ENCODE measurements at regions of chr11 and their contacts with region 1.

Region 1: DNA sequence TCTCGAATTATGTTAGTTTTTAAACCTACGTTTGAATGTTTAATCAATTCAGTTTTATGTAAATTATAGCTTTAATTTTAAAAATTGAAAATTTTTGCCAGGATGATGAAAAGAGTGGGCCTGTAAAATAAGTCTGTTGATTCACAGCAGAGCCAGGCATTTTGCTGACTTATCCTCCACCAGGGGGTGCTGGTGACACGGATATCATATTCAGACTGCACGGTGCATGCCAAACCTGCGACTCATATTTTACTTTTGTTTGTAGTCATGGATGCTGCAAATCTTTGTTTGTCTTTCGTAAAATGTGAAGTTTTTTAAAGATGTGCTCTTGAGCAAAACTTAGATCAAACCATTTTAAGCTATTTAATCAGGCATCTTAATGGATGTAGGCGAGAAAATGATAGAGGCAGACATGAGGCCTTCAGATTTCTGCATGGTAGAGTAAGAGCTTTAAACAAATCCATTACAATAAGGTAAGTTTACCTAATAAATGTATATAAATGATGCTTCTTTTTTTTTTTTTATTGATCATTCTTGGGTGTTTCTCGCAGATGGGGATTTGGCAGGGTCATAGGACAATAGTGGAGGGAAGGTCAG is 3.6 kb upstream of the OR8B3 start:
- DNase-seq: peak; percentile 71
- H3K4me3 Mint-ChIP-seq: no peak overlapping the region
- H3K27ac Mint-ChIP-seq: no peak overlapping the region
- H3K4me1 Mint-ChIP-seq: peaks cover 2% of the 10 kb centered on the region
- H3K27me3 Mint-ChIP-seq: no peaks in the 10 kb centered on the region

Region 2: DNA sequence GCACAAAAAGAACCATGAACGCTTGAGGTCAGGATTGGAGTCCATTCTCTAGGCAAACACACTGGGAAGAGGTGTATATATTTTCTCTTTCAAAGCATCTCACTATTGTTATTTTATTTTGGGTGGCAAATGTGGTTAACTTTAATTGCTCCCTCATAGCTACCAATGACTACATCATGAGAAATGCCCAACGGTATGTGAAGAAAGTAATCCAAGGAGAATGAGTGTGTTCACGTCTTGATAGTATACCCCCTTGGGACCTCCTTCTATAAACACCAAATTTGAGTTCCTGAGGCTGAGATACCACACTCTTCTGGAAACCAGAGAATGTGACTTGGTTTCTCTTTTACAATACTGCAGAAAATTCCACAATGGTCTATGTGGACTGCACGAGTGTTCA is 104.5 kb before region 1 on chr11:
- CTCF ChIA-PET with region 1: no interaction called
- POLR2A ChIA-PET with region 1: no interaction called
- intact Hi-C with region 1: no loop called
- DNase-seq: no peak
- H3K4me3 Mint-ChIP-seq: no peak overlapping the region
- H3K27ac Mint-ChIP-seq: no peak overlapping the region
- H3K4me1 Mint-ChIP-seq: no peaks in the 10 kb centered on the region
- H3K27me3 Mint-ChIP-seq: no peaks in the 10 kb centered on the region

Region 3: GRCh38 chr11:124586238-124586860 is 183.9 kb after region 1 on chr11:
- CTCF ChIA-PET with region 1: interaction called, 10 read pairs
- POLR2A ChIA-PET with region 1: no interaction called
- intact Hi-C with region 1: loop called (anchors 1 kb)
- DNase-seq: peak; percentile 57
- H3K4me3 Mint-ChIP-seq: no peak overlapping the region
- H3K27ac Mint-ChIP-seq: no peak overlapping the region
- H3K4me1 Mint-ChIP-seq: no peaks in the 10 kb centered on the region
- H3K27me3 Mint-ChIP-seq: peaks cover 15% of the 10 kb centered on the region

Measured in activated CD4-positive, alpha-beta memory T cell treated with anti-CD3 and anti-CD28 coated beads for 36 hours (primary cell).